ENCODE measurements at regions of chr15 and their contacts with region 1.

Region 1: GRCh38 chr15:73851689-73852088 is 21.7 kb upstream of the TBC1D21 start:
- DNase-seq: peak; percentile 72
- ATAC-seq: no peak
- H3K4me3 Mint-ChIP-seq: no peak overlapping the region
- H3K27ac Mint-ChIP-seq: no peak overlapping the region
- H3K4me1 Mint-ChIP-seq: no peaks in the 10 kb centered on the region
- H3K27me3 Mint-ChIP-seq: peaks cover 16% of the 10 kb centered on the region

Region 2: GRCh38 chr15:73346735-73347312 is 504.9 kb before region 1 on chr15:
- CTCF ChIA-PET with region 1: no interaction called
- POLR2A ChIA-PET with region 1: no interaction called
- intact Hi-C with region 1: loop called in 1 of 2 experiments (anchors 2 kb)
- DNase-seq: peak; percentile 80
- ATAC-seq: no peak
- H3K4me3 Mint-ChIP-seq: no peak overlapping the region
- H3K27ac Mint-ChIP-seq: no peak overlapping the region
- H3K4me1 Mint-ChIP-seq: no peaks in the 10 kb centered on the region
- H3K27me3 Mint-ChIP-seq: peaks cover 5% of the 10 kb centered on the region

Region 3: GRCh38 chr15:74291101-74292071 is 439.7 kb after region 1 on chr15:
- CTCF ChIA-PET with region 1: no interaction called
- POLR2A ChIA-PET with region 1: no interaction called
- intact Hi-C with region 1: loop called in 1 of 2 experiments (anchors 10 kb)
- DNase-seq: peak; percentile 91
- ATAC-seq: peak; percentile 92
- H3K4me3 Mint-ChIP-seq: peak overlapping the region; percentile 26
- H3K27ac Mint-ChIP-seq: peak overlapping the region; percentile 69
- H3K4me1 Mint-ChIP-seq: peaks cover 13% of the 10 kb centered on the region
- H3K27me3 Mint-ChIP-seq: peaks cover 24% of the 10 kb centered on the region

Measured in activated CD4-positive, alpha-beta T cell treated with anti-CD3 and anti-CD28 coated beads for 36 hours (primary cell).